Activated B cell treated with CpG ODN at 0.5 μM for 24 hours (primary cell): ENCODE measurements at regions of chr13 and their contacts with region 1.

Region 1: DNA sequence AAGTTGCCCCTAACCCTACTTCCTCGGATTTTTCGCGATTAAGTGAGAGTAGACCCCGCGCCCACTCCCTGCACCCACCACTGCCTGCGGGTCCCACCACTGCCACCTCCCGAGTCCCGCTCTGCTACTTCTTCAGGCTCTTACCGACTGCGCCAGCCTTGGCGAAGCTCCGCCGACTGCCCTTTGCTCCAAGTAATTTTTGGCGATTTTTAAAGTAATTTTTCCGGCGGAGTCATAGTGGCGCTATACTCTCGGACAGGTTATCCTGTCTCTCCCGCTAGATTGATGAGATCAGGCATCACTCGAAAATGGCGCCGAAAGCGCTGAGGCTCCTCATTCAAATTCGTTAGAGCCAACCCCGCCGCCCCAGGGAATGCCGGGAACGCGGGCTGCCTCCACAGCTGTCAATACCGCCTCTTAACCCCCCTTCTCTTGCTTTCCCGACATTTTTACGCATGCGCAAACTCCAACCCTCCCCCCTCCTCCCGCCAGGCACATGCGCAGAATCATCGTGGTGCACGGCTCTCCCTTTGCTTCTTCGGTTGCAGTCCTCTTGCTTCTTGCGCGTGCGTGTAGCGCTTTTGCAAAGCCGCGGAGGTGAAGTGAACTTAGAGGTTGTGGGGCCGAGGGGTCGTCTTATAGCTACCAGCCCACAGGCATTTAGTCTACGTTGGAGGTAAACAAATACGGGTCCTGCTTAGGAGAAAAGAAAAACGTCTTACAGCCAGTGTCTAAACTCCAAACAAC is 66.6 kb downstream of the KCNRG start:
- DNase-seq: peak; percentile 95
- ATAC-seq: peak; percentile 73
- H3K4me3 Mint-ChIP-seq: peak overlapping the region; percentile 100
- H3K27ac Mint-ChIP-seq: peak overlapping the region; percentile 100
- H3K4me1 Mint-ChIP-seq: peaks cover 62% of the 10 kb centered on the region
- H3K27me3 Mint-ChIP-seq: no peaks in the 10 kb centered on the region
- CTCF ChIP-seq: no peak

Region 2: DNA sequence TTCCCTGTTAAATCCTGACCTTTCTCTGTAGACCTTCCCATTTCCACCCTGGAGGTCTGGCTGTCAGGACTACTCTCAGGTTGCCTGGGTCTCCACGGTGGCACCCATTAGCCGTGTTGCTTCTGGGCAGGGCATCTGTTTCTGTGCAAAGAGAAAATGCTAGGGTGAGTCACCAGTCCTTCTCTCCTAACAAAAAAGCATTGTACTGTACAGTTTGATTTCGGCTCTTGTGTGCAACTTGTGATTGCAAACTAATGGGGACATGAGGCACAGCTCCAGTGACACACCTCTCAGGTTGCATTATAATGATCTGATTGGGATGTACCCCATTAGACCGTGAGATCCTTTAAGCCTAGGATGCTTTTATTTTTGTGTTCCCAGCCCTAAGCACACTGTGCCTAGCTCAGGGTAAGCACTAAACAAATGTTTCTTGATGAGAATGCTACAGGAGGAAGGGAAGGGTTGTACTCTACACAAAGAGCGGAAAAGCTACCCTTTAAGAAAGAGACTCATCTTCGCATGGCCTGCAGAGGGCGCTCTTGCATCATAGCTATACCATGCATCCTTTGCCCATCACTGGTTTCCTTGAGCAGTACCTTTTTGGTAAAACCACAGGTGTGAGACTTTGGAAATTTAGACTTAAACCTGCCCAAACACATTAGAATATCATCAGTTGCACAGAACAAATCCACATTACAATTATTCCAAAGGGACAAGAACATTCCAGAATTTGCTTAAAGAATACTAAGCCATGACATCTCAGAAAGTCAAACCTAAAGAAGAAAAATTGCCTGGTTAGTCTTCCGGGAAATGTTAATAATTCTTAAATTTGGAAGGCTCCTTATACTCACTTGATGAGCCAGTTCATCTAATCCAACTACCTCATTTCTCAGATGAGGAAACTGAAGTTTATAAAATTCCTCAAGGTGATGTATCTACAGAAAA is 105.3 kb before region 1 on chr13:
- CTCF ChIA-PET with region 1: interaction called, 11 read pairs
- POLR2A ChIA-PET with region 1: no interaction called
- intact Hi-C with region 1: loop called (anchors 1 kb)
- DNase-seq: peak; percentile 57
- ATAC-seq: peak; percentile 86
- H3K4me3 Mint-ChIP-seq: no peak overlapping the region
- H3K27ac Mint-ChIP-seq: no peak overlapping the region
- H3K4me1 Mint-ChIP-seq: peaks cover 2% of the 10 kb centered on the region
- H3K27me3 Mint-ChIP-seq: no peaks in the 10 kb centered on the region
- CTCF ChIP-seq: no peak

Region 3: GRCh38 chr13:50236898-50237318 is 155.1 kb after region 1 on chr13:
- CTCF ChIA-PET with region 1: interaction called, 5 read pairs
- POLR2A ChIA-PET with region 1: interaction called, 39 read pairs
- intact Hi-C with region 1: loop called (anchors 1 kb)
- DNase-seq: no peak
- ATAC-seq: peak; percentile 90
- H3K4me3 Mint-ChIP-seq: peak overlapping the region; percentile 55
- H3K27ac Mint-ChIP-seq: peak overlapping the region; percentile 92
- H3K4me1 Mint-ChIP-seq: peaks cover 53% of the 10 kb centered on the region
- H3K27me3 Mint-ChIP-seq: no peaks in the 10 kb centered on the region
- CTCF ChIP-seq: no peak

Region 4: DNA sequence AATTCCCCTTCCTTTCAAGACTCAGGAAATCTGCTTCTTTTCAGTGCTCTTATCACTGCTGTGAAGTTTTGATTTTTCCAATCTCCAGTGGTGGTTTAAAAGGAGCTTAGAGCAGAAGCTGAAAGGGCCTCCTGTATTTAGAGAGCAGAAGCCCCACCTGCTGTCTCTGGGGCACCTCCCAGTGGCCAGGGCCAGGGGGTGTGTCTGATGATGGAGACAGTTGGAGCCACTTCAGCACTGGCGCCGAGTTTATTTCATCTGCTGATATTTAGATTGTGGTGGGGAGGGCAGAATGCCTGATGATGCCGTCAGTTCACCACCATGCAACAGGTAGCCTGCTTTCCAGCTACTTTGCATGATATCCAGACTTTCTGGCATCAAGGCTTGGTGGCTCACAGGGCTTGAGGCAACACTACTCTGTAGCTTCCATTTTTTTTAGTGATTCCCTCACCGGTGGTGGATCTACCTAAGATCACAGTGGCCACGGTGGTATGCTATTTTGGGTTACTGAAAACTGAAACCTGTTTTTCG is 305.3 kb after region 1 on chr13:
- CTCF ChIA-PET with region 1: interaction called, 8 read pairs
- POLR2A ChIA-PET with region 1: interaction called, 5 read pairs
- intact Hi-C with region 1: loop called (anchors 1 kb)
- DNase-seq: peak; percentile 28
- ATAC-seq: peak; percentile 81
- H3K4me3 Mint-ChIP-seq: no peak overlapping the region
- H3K27ac Mint-ChIP-seq: no peak overlapping the region
- H3K4me1 Mint-ChIP-seq: peaks cover 4% of the 10 kb centered on the region
- H3K27me3 Mint-ChIP-seq: no peaks in the 10 kb centered on the region
- CTCF ChIP-seq: no peak

Region 5: DNA sequence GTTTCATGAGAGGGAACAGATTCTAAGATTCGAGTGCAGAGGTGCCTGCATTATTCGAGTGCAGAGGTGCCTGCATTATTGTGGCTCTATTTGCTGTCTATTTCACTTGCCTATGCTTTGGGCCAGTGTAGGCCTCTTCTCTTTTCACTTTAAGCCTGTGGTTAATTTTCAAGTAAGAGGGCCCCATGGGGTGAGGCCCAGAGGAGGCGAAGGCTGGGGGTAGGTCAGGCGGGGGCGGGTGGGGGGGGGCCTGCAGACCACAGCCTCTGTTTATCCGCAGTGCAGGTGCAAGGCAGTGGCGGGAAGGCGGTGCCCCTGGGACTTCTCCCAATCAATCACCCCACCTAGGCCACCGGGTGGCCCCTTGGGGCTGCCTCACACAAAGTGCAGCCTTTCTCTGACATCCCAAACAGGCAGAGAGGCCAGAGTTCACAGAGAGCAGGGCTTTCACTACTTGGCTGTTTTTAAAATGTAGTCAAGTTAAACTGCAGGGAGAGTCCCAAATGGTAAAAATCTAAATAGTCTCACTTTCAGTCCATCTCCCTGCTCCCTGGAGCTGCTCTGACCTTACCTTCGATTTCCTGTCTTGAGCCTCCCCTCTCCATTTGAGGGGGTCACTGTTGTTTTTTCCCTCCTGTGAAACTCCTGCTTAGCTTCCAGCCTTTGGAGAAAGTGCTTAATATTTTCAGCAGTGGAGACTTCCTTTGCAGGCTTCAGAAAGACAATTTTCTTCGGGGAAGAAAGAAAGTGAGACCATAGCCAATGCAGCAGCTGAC is 512.6 kb after region 1 on chr13:
- CTCF ChIA-PET with region 1: interaction called, 4 read pairs
- POLR2A ChIA-PET with region 1: interaction called, 8 read pairs
- intact Hi-C with region 1: loop called (anchors 1 kb)
- DNase-seq: peak; percentile 76
- ATAC-seq: peak; percentile 88
- H3K4me3 Mint-ChIP-seq: peak overlapping the region; percentile 73
- H3K27ac Mint-ChIP-seq: peak overlapping the region; percentile 98
- H3K4me1 Mint-ChIP-seq: peaks cover 95% of the 10 kb centered on the region
- H3K27me3 Mint-ChIP-seq: no peaks in the 10 kb centered on the region
- CTCF ChIP-seq: no peak

Region 6: DNA sequence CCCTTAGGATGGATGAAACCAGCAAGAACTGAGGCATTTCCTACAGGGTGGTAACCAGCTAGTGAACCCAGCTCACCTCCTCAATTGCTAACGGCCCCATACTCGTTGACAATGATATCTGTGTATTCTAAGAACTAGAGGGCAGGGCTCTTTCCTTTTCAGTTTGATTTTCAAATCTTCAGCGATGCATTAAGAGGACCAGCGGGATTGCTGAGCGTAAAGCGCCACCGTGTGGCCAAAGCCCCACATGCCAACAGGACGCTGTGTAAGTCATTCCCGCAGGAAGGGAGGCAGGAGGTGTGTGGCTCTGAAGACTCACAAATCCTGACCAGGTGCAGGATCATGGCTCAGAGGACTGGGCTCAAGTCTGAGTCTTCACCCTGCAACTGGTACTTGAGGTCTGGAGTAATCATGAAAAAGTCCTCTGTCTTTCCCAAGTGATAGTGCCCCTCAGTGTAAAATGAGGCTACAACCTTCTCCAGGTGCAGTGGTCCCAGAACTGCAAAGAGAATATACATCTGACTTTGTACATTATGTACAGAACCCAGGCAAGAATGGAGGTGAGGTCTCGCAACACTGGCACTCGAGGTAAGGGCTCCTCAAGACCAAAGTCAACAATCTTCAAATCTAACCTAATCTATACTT is 988.3 kb after region 1 on chr13:
- CTCF ChIA-PET with region 1: interaction called, 3 read pairs
- POLR2A ChIA-PET with region 1: no interaction called
- intact Hi-C with region 1: loop called (anchors 10 kb)
- DNase-seq: peak; percentile 68
- ATAC-seq: peak; percentile 92
- H3K4me3 Mint-ChIP-seq: no peak overlapping the region
- H3K27ac Mint-ChIP-seq: no peak overlapping the region
- H3K4me1 Mint-ChIP-seq: peaks cover 7% of the 10 kb centered on the region
- H3K27me3 Mint-ChIP-seq: peaks cover 28% of the 10 kb centered on the region
- CTCF ChIP-seq: peak; percentile 96